ENCODE measurements at regions of chr1 and their contacts with region 1.

Region 1: GRCh38 chr1:64823691-64824476 is 79.0 kb downstream of the RAVER2 start:
- DNase-seq: no peak
- H3K4me3 ChIP-seq: peak overlapping the region in 1 of 4 donors; percentile 15
- H3K27ac ChIP-seq: no peak overlapping the region
- H3K4me1 ChIP-seq: peaks cover 4 to 15% (median 9%) of the 10 kb centered on the region in 4 donors
- H3K27me3 ChIP-seq: no peaks in the 10 kb centered on the region
- CTCF ChIP-seq: peak; percentile 80 to 82 (median 81)
- EP300 ChIP-seq: no peak
- POLR2A ChIP-seq: no peak

Region 2: DNA sequence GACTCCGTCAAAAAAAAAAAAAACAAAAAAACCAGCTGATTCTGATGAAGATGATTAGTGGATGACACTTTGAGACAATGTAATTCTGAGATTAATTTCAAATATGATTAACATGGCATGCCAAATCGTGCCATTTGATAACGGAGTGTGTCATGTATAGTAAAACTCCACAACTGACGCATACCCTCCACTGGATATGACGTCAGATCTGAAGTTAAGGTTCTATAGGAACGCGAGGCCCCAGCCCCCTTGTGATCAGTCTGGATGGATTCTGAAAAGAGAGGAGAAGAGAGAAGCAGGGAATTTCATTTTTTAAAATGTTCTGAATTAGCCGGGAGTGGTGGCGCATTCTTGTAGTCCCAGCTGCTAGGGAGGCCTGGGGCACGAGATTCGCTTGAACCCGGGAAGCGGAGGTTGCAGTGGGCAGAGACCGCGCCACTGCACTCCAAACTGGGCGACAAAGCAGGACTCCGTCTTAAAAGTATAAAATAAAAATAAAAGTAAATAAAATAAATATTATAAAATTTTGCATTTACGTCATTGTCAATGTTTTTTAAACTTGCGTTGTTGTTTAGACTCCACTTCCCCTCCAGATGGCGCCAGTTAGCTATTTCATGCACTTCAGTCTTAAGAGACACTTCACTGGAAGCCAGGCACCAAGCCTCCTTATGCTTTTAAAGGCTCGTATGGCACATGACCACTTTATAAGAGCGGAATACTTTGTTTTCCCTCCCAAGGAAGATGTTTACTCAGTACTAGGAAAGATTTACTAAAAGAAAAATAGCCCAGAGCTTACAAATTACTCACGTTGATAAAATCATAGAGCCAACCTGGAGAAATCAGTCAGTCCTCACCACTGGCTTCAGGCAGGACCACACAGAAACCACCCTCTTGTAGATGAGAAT is 555.0 kb before region 1 on chr1:
- intact Hi-C with region 1: loop called (anchors 5 kb)
- DNase-seq: no peak
- H3K4me3 ChIP-seq: no peak overlapping the region
- H3K27ac ChIP-seq: no peak overlapping the region
- H3K4me1 ChIP-seq: peaks cover 3 to 6% (median 4%) of the 10 kb centered on the region in 4 donors
- H3K27me3 ChIP-seq: no peaks in the 10 kb centered on the region
- CTCF ChIP-seq: peak; percentile 70 to 75 (median 74)
- EP300 ChIP-seq: no peak
- POLR2A ChIP-seq: no peak

Region 3: DNA sequence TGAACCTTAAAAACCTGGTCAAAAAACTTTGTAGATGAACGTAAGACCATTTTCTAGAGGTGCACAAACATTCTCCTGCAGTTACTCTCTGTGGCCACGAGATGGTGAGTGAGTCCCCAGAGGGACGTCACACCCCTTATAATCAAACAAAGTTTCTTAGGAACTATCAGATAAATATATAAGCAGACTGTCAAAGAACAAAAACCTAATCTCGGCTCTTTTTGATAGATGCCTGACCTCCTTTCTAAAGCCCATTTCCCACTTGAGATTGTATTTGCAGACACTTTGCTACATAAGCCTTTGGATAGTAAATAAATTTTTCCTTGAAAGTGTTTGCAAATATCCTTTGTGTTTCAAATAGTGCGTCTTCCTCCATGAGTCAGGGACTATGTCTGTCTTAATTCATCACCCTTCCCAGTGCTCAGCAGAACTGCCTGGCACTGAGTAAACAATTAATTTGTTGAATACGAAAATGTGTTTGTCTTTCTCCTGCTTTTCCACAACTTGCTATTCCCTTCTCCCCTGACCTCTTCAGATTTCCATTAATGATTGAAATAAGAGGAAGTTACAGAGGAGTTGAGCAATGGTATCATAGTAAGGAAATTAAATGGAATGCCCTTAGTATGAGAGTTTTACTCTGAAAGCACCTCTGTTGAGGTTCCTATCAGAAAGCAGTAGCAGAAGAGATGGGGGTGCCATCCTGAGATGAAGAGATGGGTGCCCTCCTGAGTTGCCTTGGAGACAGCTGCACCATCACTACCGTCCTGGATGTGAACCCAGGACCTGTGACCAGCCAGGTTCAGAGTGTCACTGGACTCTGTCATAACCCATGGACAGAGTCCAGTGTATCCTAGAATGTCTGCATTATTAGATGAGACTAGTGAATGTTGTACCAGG is 136.8 kb before region 1 on chr1:
- intact Hi-C with region 1: loop called (anchors 1 kb)
- DNase-seq: no peak
- H3K4me3 ChIP-seq: no peak overlapping the region
- H3K27ac ChIP-seq: no peak overlapping the region
- H3K4me1 ChIP-seq: peaks cover 14 to 26% (median 21%) of the 10 kb centered on the region in 4 donors
- H3K27me3 ChIP-seq: no peaks in the 10 kb centered on the region
- CTCF ChIP-seq: peak; percentile 89 to 92 (median 89)
- EP300 ChIP-seq: no peak
- POLR2A ChIP-seq: no peak

Region 4: GRCh38 chr1:64744492-64745180 is 79.2 kb before region 1 on chr1 and contains the start of gene RAVER2:
- intact Hi-C with region 1: loop called (anchors 2 kb)
- DNase-seq: no peak
- H3K4me3 ChIP-seq: peak within 1 kb of the TSS; percentile 79 to 93 (median 86)
- H3K27ac ChIP-seq: peak within 1 kb of the TSS; percentile 87 to 93 (median 88)
- H3K4me1 ChIP-seq: peaks cover 24 to 44% (median 42%) of the 10 kb centered on the region in 4 donors
- H3K27me3 ChIP-seq: no peaks in the 10 kb centered on the region
- CTCF ChIP-seq: peak; percentile 44 to 58 (median 45)
- EP300 ChIP-seq: no peak
- POLR2A ChIP-seq: no peak
- total RNA-seq, gene RAVER2: 17.9 to 30.2 (median 22.4) TPM

Region 5: GRCh38 chr1:64861611-64862010 is 37.7 kb after region 1 on chr1:
- intact Hi-C with region 1: no loop called
- DNase-seq: no peak
- H3K4me3 ChIP-seq: no peak overlapping the region
- H3K27ac ChIP-seq: no peak overlapping the region
- H3K4me1 ChIP-seq: peaks cover 0 to 10% (median 3%) of the 10 kb centered on the region in 4 donors
- H3K27me3 ChIP-seq: no peaks in the 10 kb centered on the region
- CTCF ChIP-seq: peak in 1 of 3 experiments; percentile 30
- EP300 ChIP-seq: no peak
- POLR2A ChIP-seq: no peak